Cardiac septum (tissue), 1 donor: ENCODE measurements at regions of chrX and their contacts with region 1.

Region 1: GRCh38 chrX:71365876-71366673 is at the start of gene TAF1:
- DNase-seq: peak; percentile 96
- total RNA-seq, gene TAF1: 25.7 TPM

Region 2: DNA sequence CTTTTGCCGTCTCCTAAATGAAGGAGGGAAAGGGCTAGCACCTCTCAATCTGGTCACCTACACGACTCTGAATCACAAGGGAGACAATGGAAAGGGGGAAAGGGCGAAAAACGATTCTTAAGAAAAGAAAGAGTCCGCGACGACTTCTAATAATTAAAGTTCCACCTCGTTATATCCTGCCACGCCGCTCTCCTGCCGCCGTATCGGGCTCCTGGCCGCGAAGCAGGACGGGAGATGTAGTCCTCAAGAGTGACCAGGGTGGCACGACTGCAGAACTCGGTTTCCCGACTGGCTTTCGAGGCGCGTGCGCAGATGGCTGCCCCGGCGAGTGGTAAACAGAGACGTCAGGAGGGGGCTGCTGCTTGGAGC is 270.5 kb before region 1 on chrX and contains the start of gene FOXO4:
- intact Hi-C with region 1: loop called (anchors 5 kb)
- DNase-seq: peak; percentile 95
- total RNA-seq, gene FOXO4: 37.4 TPM

Region 3: DNA sequence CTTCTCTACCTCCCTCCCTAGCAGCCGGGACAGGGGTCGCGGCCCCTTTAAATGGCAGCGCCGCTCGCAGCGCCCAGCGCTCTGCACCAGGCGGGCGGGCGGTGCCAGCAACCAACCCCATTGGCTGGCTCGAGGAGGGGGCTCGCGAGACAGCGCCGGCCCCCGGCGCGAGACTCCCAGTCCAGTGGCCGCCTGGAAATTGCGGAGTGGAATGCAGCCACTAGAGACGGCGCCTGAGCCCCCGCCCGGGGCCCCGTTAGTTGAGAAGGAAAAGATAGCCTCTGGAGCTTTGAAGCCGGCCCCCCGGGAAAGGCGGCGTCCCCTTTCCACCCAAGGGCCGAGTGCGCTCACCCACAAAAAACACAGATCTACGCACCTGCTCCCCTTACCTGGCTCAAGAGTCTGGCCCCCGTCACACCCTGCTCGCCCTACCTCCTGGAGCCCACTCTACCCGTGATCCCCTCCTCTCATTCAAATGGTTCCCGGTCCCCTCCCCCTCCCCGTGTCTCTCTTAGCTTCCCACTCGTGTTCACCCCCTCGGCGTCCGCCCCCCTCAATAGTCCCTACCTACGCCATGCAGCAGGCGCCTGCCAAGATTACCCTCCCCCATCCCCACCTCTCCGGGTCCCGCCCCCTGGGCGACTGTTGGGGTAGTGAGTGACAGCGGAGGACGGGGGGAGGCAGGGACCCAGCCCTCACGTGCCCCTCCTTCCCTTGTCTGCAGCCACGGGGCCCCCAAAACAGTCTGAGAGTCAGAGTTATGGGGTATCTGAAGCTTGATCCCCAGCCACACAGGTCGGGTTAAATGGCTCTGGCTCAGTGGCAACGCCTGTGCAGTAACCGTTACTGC is 111.8 kb before region 1 on chrX and contains the start of gene ZMYM3:
- intact Hi-C with region 1: loop called (anchors 5 kb)
- DNase-seq: peak; percentile 93
- total RNA-seq, gene ZMYM3: 12.7 TPM

Region 4: GRCh38 chrX:71283403-71284143 is 82.5 kb before region 1 on chrX and contains the start of gene NONO:
- intact Hi-C with region 1: loop called (anchors 5 kb)
- DNase-seq: peak; percentile 91
- total RNA-seq, gene NONO: 107 TPM

Region 5: DNA sequence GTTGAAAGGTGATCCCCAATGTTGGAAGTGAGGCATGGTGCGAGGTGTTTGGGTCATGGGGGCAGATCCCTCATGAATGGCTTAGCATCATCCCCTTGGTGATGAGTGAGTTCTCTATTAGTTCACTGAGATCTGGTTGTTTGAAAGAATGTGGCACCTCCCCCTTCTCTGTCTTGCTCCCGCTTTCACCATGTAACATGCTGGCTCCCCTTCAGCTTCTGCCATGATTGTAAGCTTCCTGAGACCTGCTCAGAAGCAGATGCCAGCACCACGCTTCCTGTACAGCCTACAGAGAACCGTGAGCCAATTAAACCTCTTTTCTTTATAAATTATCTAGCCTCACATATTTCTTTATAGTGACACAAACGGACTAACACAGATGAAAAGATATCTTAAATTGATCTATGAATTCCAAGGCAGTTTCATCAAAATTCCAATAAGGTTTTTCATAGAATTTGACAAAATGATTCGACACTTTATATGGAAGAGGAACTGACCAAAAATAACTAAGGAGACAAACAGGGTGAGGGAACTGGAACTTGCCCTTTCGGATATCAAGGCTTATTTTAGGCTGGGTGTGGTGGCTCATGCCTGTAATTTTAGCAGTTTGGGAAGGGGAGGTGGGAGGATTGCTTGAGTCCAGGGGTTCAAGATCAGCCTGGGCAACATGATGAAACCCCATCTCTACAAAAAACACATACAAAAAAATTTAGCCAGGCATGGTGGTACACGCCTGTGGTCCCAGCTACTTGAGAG is 109.9 kb after region 1 on chrX:
- intact Hi-C with region 1: no loop called
- DNase-seq: no peak

Region 6: GRCh38 chrX:71650333-71650969 is 284.4 kb after region 1 on chrX:
- intact Hi-C with region 1: no loop called
- DNase-seq: no peak